ENCODE measurements at regions of chr12 and their contacts with region 1.

Region 1: DNA sequence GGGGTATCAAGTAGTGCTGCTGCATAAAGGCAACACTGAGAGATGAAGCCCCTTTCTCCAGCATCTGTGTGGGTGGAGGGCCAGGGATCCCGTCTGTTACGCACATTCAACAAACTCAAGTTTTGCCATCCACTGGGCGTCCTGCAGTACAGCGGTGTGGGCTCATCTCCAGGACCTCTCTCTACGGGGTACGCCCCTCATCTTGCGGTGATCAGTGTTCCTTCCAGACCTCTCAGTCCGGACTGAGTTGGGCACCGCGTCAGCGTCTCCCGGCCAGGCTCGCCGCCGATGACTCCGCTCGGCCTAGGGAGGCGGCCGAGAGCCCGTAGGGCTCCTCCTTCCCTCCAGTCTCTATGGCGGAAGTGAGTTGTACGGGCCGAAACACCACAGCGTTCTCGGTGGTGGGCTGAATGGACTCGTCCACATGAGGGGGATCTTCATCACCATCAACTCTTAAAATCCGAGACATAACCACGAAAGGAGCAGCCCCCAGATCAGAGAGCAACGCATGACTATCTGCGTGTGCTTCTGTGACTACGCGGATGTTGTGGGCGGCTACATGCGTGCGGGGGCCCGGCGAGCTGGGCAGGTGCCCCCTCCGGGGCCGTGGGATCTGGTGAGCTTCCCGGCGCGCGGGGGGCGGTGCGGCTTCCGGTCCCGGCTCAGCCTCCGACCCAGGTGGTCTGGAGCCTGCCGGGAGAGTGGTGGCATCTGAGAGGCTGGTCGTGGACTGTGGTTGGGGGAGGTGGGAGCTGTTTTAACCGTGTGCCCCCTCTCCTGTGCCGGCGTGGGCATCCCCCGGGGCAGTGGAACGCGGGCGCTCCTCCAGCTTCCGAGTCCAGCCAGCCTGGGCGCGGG is at the start of gene ATG101:
- DNase-seq: peak; percentile 75 to 96 (median 82)
- ATAC-seq: peak; percentile 90
- H3K4me3 ChIP-seq: peak within 1 kb of the TSS; percentile 98
- H3K4me3 Mint-ChIP-seq: peak within 1 kb of the TSS; percentile 93
- H3K27ac ChIP-seq: peak within 1 kb of the TSS; percentile 78 to 94
- H3K27ac Mint-ChIP-seq: peak within 1 kb of the TSS; percentile 93
- H3K4me1 ChIP-seq: peaks cover 41% of the 10 kb centered on the region
- H3K4me1 Mint-ChIP-seq: peaks cover 49% of the 10 kb centered on the region
- H3K27me3 ChIP-seq: no peaks in the 10 kb centered on the region
- H3K27me3 Mint-ChIP-seq: no peaks in the 10 kb centered on the region
- CTCF ChIP-seq: peak; percentile 76
- total RNA-seq, gene ATG101: 20.6 to 20.9 TPM

Region 2: DNA sequence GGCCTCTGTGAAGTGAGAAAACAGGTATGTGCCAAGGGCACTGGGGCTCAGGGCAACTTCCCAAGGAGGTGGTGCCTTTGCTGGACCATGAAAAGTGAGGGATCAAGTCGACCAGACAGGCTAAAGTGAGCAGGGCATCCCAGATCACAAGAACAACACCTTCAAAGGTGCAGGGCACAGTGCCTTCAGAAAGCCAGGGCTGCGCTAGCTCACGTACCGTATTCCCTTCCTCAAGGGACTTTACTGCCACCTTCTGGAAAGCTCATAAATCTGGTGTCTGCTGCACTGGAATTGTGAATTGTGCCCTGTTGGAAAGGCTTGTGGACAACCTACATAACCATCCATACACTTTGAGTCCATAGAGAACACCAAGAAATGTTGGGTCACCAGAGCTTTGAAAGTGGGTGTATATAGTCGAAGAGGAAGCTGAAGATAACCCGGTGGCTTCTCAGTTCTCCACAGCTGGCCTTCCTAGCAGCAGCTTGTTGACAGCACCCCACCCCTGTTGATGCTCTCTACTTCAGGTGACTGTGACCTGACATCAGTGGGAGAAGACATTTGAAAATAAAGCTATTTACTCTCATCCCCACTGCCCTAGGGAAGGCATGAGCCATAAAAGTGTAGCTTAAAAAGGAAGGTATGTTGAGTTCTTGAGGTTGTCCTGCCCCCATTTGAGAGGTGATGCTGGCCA is 245.5 kb before region 1 on chr12:
- CTCF ChIA-PET with region 1: no interaction called
- POLR2A ChIA-PET with region 1: interaction called, 6 read pairs
- intact Hi-C with region 1: loop called in 1 of 2 experiments (anchors 10 kb)
- DNase-seq: peak in 5 of 14 experiments; percentile 8 to 76 (median 56)
- ATAC-seq: no peak
- H3K4me3 ChIP-seq: no peak overlapping the region
- H3K4me3 Mint-ChIP-seq: peak overlapping the region; percentile 85
- H3K27ac ChIP-seq: no peak overlapping the region
- H3K27ac Mint-ChIP-seq: peak overlapping the region; percentile 66
- H3K4me1 ChIP-seq: peaks cover 45% of the 10 kb centered on the region
- H3K4me1 Mint-ChIP-seq: peaks cover 38% of the 10 kb centered on the region
- H3K27me3 ChIP-seq: no peaks in the 10 kb centered on the region
- H3K27me3 Mint-ChIP-seq: peaks cover 4% of the 10 kb centered on the region
- CTCF ChIP-seq: peak; percentile 43

Region 3: DNA sequence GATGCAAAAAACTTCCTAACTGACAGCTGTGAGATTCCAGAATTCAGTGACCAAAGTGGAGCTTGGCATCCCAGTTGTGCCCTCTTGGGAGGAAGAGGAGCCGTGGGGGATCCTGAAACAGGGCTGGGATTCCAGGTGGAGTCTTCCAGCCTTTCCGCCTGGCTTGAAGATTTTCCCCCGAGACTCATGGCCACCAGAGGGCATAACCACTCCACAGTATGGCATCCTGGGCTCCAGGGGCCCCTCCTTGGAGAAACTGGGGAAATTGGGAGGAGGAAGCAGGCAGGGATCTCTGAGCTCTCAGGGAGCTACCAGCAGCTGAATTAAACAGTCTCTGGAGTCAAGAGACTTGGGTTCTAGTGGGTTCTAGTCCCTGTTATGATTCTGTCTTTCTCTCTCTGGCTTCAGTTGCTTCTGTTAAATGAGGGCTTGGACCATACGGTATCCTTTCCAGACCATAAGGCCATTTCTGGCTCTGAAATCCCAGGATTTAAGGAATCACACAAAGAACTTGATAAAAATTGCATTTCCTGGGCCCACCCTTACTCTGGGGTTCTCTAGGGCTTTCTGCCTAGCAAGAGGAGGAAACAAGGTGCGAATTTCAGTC is 65.4 kb before region 1 on chr12:
- CTCF ChIA-PET with region 1: interaction called, 4 read pairs
- POLR2A ChIA-PET with region 1: interaction called, 10 read pairs
- intact Hi-C with region 1: no loop called
- DNase-seq: peak in 3 of 14 experiments; percentile 47 to 49 (median 48)
- ATAC-seq: no peak
- H3K4me3 ChIP-seq: no peak overlapping the region
- H3K4me3 Mint-ChIP-seq: no peak overlapping the region
- H3K27ac ChIP-seq: no peak overlapping the region
- H3K27ac Mint-ChIP-seq: peak overlapping the region; percentile 20
- H3K4me1 ChIP-seq: peaks cover 30% of the 10 kb centered on the region
- H3K4me1 Mint-ChIP-seq: peaks cover 21% of the 10 kb centered on the region
- H3K27me3 ChIP-seq: no peaks in the 10 kb centered on the region
- H3K27me3 Mint-ChIP-seq: no peaks in the 10 kb centered on the region
- CTCF ChIP-seq: peak; percentile 59

Region 4: GRCh38 chr12:52032804-52033502 is 36.6 kb before region 1 on chr12:
- CTCF ChIA-PET with region 1: interaction called, 21 read pairs
- POLR2A ChIA-PET with region 1: interaction called, 37 read pairs
- intact Hi-C with region 1: loop called in 1 of 2 experiments (anchors 2 kb)
- DNase-seq: peak; percentile 59 to 97 (median 79)
- ATAC-seq: peak; percentile 83
- H3K4me3 ChIP-seq: peak overlapping the region; percentile 56
- H3K4me3 Mint-ChIP-seq: peak overlapping the region; percentile 80
- H3K27ac ChIP-seq: peak overlapping the region; percentile 43 to 84
- H3K27ac Mint-ChIP-seq: peak overlapping the region; percentile 86
- H3K4me1 ChIP-seq: peaks cover 40% of the 10 kb centered on the region
- H3K4me1 Mint-ChIP-seq: peaks cover 33% of the 10 kb centered on the region
- H3K27me3 ChIP-seq: no peaks in the 10 kb centered on the region
- H3K27me3 Mint-ChIP-seq: no peaks in the 10 kb centered on the region
- CTCF ChIP-seq: no peak

Region 5: GRCh38 chr12:52050761-52051541 is 18.6 kb before region 1 on chr12 and contains the start of gene NR4A1:
- CTCF ChIA-PET with region 1: interaction called, 22 read pairs
- POLR2A ChIA-PET with region 1: interaction called, 47 read pairs
- intact Hi-C with region 1: loop called (anchors 1 kb)
- DNase-seq: peak; percentile 96 to 100 (median 99)
- ATAC-seq: peak; percentile 84
- H3K4me3 ChIP-seq: peak within 1 kb of the TSS; percentile 86
- H3K4me3 Mint-ChIP-seq: peak within 1 kb of the TSS; percentile 93
- H3K27ac ChIP-seq: peak within 1 kb of the TSS; percentile 91 to 98
- H3K27ac Mint-ChIP-seq: peak within 1 kb of the TSS; percentile 98
- H3K4me1 ChIP-seq: peaks cover 36% of the 10 kb centered on the region
- H3K4me1 Mint-ChIP-seq: peaks cover 41% of the 10 kb centered on the region
- H3K27me3 ChIP-seq: no peaks in the 10 kb centered on the region
- H3K27me3 Mint-ChIP-seq: no peaks in the 10 kb centered on the region
- CTCF ChIP-seq: no peak
- total RNA-seq, gene NR4A1: 67.0 to 79.2 TPM

Region 6: DNA sequence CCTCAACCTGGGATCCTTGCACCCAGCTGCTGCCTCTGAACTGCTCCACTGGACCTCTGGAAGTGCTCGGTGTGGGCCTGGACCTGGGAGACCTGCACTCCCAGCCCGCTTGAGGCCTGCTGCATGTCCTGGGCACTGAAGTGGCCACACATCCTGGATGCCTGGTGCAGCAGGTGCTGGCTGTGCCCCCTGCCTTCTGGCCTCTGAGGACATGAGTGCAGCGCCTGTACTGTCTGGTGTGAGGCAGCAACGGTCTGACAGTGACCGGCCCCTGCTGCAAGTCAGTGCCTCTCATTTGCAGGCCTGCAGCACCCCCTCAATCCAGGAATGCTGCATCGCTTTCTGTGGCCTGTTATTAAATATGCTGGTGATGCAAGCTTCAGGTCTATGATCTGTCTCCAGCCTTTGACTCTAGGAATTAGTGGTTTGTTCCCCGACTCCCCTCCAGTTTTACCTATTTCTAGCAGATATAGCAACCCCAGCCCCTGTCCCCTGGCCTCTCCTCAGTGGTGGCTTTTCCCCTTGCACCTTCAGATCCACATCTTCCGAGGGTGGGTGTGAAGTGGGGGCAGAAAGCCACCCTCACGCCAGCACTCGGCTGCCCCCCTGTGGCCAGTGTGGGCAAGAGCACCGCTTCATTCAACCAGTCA is 13.6 kb after region 1 on chr12:
- CTCF ChIA-PET with region 1: interaction called, 7 read pairs
- POLR2A ChIA-PET with region 1: interaction called, 3 read pairs
- intact Hi-C with region 1: loop called in 1 of 2 experiments (anchors 1 kb)
- DNase-seq: peak; percentile 49 to 83 (median 58)
- ATAC-seq: peak; percentile 83
- H3K4me3 ChIP-seq: no peak overlapping the region
- H3K4me3 Mint-ChIP-seq: no peak overlapping the region
- H3K27ac ChIP-seq: no peak overlapping the region
- H3K27ac Mint-ChIP-seq: no peak overlapping the region
- H3K4me1 ChIP-seq: peaks cover 18% of the 10 kb centered on the region
- H3K4me1 Mint-ChIP-seq: peaks cover 16% of the 10 kb centered on the region
- H3K27me3 ChIP-seq: peaks cover 0 to 4% of the 10 kb centered on the region in 2 experiments
- H3K27me3 Mint-ChIP-seq: peaks cover 8% of the 10 kb centered on the region
- CTCF ChIP-seq: peak; percentile 99

Measured in CD4-positive, alpha-beta T cell (primary cell).